Mammary epithelial cell (primary cell): ENCODE measurements at regions of chr11 and their contacts with region 1.

Region 1: DNA sequence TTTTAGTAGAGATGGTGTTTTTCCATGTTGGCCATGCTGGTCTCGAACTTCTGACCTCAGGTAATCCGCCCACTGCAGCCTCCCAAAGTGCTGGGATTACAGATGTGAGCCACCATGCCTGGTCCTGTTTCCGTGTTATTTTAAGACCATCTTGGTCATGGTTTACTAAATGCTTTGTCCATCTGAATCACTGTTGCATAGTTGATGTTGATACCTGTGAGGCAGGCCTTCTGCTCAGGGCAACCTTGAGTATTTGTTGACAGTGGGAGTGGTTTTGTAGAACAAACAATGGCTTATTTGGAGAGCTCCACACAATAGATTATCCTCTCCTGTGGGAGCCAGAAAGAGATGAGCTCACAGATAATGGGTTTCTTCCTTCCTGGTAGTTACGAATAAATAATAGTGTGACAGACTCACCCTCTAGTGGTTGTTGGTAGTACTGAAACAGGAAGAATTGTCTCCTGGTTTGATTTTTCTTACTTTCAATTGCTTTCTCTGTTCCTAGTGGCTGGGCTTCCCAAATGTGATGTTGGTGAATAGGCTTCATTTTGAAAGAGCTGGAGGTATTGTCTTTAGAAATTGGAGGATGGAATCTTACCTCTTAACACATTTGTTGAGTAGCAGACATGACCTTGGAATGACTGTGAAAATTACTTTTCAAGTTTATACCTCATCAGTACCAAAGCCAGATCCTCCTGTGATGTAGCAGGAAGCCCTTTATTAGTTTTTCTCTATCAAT is 39.0 kb downstream of the CTNND1 start:
- DNase-seq: peak; percentile 86
- H3K4me3 ChIP-seq: no peak overlapping the region
- H3K27ac ChIP-seq: peak overlapping the region; percentile 84
- H3K4me1 ChIP-seq: peaks cover 30% of the 10 kb centered on the region
- H3K27me3 ChIP-seq: no peaks in the 10 kb centered on the region
- CTCF ChIP-seq: peak; percentile 74 to 80

Region 2: GRCh38 chr11:57345555-57346211 is 454.9 kb before region 1 on chr11:
- CTCF ChIA-PET with region 1: no interaction called
- dilution Hi-C with region 1: no loop called
- in situ Hi-C with region 1: no loop called
- intact Hi-C with region 1: loop called (anchors 5 kb)
- DNase-seq: peak; percentile 60
- H3K4me3 ChIP-seq: no peak overlapping the region
- H3K27ac ChIP-seq: no peak overlapping the region
- H3K4me1 ChIP-seq: no peaks in the 10 kb centered on the region
- H3K27me3 ChIP-seq: no peaks in the 10 kb centered on the region
- CTCF ChIP-seq: peak; percentile 57 to 69

Region 3: DNA sequence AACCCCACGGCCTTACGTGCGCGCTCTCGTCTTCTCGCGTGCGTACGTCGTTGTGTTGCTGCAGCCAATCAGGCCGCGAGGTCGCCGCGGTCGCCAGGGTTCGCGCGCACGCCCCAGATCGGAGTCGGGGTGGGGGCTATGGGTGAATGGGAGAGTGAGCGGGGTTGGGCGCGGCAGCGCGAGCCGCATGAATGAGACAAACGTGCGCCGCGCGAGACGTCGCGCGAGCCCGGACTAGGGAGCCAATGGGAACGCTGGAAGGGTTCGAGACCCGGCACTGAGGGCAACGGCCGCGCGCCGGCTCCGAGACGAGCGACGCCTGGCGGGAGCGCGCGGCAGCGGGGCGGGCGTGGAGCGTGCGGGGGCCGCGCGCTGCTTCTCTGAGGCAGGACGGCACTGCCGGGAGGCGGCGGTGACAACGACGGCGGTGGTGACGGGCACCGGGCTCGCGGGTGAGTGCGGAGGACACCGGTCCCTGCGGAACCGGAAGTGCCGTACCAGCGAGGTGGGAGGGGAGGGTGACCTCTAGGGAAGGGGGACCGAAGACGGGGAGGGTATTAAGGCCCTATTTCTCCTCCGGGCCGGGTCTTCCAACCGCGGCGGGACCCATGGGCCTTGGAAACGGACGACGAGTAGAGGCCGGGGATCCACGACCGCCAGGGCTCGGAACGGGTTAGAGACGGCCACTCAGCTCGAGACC is 132.7 kb before region 1 on chr11 and contains the start of gene ZDHHC5:
- CTCF ChIA-PET with region 1: no interaction called
- dilution Hi-C with region 1: no loop called
- in situ Hi-C with region 1: no loop called
- intact Hi-C with region 1: loop called (anchors 2 kb)
- DNase-seq: peak; percentile 99
- H3K4me3 ChIP-seq: peak within 1 kb of the TSS; percentile 99 to 100 (median 99)
- H3K27ac ChIP-seq: peak within 1 kb of the TSS; percentile 95
- H3K4me1 ChIP-seq: peaks cover 20% of the 10 kb centered on the region
- H3K27me3 ChIP-seq: no peaks in the 10 kb centered on the region
- CTCF ChIP-seq: peak; percentile 16 to 52
- total RNA-seq, gene ZDHHC5: 81.7 to 101 TPM

Region 4: DNA sequence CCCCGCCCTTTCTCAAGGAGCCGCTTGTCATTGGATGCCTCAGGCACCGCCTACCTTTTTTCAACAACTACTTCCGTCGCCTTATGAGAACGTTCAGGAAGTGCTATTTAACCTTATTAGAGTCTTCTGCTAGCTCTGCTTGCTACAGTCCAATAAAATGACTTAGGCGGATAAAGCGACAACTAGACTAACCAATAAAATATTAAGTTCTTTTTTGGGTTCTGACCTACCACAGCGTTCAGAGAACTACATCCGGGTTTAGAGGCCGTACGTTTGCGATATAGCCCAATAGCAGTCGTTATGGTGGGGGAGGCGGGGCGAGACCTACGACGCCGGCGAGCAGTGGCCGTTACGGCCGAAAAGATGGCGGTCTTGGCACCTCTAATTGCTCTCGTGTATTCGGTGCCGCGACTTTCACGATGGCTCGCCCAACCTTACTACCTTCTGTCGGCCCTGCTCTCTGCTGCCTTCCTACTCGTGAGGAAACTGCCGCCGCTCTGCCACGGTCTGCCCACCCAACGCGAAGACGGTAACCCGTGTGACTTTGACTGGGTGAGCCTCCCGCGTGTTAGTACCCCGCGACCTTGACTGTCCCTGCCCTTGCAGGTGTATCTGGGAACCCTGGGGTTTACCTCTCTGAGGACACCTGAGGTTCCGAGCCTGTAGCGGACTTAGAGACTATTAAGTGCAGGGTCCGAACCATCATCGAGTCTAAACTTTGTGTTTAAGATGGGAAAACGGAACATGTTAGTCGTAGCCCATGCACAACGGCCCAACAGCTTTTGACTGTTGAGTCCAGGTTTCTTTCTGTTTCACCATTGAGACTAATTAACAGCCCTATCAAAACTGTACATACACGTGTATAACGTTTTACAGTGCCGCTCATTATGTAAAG is 88.1 kb before region 1 on chr11 and contains the start of gene TMX2:
- CTCF ChIA-PET with region 1: interaction called, 5 read pairs
- dilution Hi-C with region 1: loop called (anchors 5 kb)
- in situ Hi-C with region 1: no loop called
- intact Hi-C with region 1: loop called (anchors 1 kb)
- DNase-seq: peak; percentile 99
- H3K4me3 ChIP-seq: peak within 1 kb of the TSS; percentile 61 to 97 (median 86)
- H3K27ac ChIP-seq: peak within 1 kb of the TSS; percentile 74
- H3K4me1 ChIP-seq: peaks cover 14% of the 10 kb centered on the region
- H3K27me3 ChIP-seq: no peaks in the 10 kb centered on the region
- CTCF ChIP-seq: no peak
- total RNA-seq, gene TMX2: 54.0 to 95.8 TPM

Region 5: DNA sequence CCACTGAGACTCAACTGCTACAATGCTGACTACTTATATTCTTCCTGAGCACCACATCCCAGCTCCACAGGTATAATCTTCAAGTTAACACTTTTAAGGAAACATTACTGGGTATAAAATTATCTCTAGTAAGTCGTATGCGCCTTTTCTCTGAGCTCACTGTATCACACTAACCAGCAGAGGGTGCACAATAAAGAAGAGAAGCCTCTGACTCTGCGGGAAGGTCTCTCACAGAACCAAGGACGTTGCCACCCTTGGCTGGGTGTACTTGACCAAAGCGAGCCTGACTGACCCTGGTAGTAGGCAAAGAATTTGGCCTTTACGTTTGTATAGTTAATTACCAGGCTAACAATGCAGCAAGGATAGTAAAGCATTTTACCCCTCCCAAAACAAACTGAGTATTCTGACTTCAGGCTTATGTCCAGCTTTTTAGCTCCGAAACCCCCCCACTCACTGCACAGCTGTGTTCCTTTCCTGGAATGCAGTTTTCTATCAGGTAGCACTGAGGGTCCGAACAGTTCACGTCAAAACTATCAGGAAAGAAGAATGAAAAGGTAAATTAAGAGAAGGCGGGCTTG is 48.8 kb before region 1 on chr11 and contains the start of gene BTBD18:
- CTCF ChIA-PET with region 1: interaction called, 27 read pairs
- dilution Hi-C with region 1: no loop called
- in situ Hi-C with region 1: no loop called
- intact Hi-C with region 1: loop called (anchors 1 kb)
- DNase-seq: peak; percentile 49
- H3K4me3 ChIP-seq: no peak within 1 kb of the TSS
- H3K27ac ChIP-seq: no peak within 1 kb of the TSS
- H3K4me1 ChIP-seq: no peaks in the 10 kb centered on the region
- H3K27me3 ChIP-seq: no peaks in the 10 kb centered on the region
- CTCF ChIP-seq: peak; percentile 55 to 63
- total RNA-seq, gene BTBD18: not detected

Region 6: GRCh38 chr11:57778318-57779037 is 22.1 kb before region 1 on chr11:
- CTCF ChIA-PET with region 1: interaction called, 6 read pairs
- dilution Hi-C with region 1: no loop called
- in situ Hi-C with region 1: no loop called
- intact Hi-C with region 1: loop called (anchors 1 kb)
- DNase-seq: peak; percentile 86
- H3K4me3 ChIP-seq: peak overlapping the region in 2 of 3 experiments; percentile 9 to 13
- H3K27ac ChIP-seq: peak overlapping the region; percentile 89
- H3K4me1 ChIP-seq: peaks cover 78% of the 10 kb centered on the region
- H3K27me3 ChIP-seq: no peaks in the 10 kb centered on the region
- CTCF ChIP-seq: no peak